ENCODE measurements at regions of chr20 and their contacts with region 1.

Region 1: DNA sequence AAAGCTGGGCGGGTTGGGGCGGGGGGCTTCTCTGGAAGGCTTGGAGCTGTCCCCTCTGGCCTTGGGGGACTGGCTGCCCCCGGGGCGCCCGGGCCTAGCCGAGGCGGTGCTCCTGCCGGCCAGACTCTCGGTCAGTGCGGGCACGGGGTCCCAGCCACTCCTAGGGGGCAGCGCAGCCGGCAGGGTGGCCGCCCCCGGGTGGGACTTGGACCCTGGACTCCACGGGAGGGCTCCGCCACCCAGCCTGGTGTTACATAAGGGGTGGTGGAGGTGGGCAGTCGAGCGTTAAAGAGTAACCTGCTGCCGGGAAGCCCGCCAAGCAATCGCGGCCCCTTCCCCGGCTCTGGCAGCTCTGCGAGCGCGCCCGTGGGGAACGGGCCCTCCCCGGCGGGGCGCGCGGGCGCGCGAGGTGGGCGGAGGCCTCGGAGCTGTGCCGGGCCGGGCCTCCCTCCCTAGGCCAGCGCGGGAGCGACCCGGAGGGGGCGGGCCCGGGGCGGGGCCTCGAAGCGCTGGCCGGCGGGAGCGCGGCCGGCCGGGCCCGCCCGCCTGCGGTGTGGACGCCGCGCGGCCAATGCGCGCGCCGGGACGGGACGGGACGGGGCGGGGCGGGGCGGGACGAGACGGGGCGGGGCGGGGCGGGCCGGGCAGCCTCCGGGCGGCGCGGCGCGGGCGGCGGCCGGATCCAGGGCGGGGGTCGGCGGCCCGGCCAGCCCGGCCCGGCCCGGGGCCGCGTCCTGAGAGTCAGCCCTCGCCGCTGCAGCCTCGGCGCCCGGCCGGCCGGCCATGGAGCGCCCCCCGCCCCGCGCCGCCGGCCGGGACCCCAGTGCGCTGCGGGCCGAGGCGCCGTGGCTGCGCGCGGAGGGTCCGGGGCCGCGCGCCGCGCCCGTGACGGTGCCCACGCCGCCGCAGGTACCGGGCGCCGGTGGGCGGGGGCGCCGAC is at the start of gene SLC2A4RG:
- DNase-seq: peak; percentile 91
- ATAC-seq: peak; percentile 73
- total RNA-seq, gene SLC2A4RG: 97.4 TPM

Region 2: DNA sequence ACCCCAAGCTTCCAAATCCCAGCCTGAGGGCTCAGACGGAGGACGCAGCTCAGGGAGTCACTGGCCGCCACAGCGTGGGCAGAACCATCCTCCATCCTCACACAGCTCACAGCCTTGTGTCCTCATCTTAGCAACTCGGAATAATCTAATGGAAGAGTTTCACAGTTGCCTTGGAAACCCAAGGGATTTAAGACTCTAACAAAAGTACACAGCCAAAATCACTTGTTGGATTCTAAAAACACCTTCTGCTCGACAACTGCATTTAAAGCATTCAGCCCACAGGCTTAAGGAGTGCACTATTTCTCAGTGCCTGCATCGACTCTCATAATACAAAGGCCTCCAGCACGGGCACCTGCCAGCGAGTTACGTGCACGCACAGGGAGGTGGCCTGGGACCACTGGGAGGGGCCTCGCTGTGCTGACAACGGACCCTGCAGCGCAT is 46.3 kb after region 1 on chr20:
- intact Hi-C with region 1: loop called (anchors 5 kb)
- DNase-seq: no peak
- ATAC-seq: no peak

Region 3: DNA sequence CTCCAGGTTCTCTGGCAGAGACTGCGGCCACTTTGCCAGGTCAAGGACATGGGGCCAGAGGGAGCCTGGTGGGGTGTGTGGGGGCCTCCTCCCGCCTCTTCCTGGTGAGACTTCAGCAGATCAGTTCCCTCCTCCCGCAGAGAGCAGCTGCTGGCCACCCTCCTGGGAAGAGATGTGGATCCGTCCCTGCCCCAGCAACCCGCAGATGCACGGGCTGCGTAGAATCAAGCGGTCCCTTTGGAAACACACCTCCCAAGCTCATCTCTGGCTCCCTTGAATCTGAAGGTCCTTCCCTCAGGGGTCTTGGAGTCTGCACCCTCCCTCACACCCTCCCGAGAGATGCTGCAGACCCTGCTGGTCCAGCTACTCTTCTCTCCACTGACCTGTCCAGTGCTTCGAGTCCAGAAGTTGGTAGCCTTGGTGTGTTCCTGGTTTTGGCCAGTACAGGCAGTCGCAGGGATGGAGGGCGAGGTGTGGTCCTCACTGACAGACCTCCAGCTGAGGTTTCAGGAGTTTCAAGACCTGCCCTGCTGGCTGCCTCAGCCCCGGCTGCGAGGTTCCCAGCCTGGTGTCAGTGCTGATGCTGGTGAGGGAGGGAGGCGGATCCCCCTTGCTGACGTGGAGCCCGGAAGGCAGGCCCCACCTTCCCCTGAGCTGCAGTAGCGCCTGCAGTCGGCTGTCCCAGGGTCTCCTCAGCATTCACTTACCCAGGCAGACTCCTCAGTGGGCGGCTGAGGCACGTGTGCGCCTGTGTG is 367.8 kb after region 1 on chr20 and contains the start of gene NPBWR2:
- intact Hi-C with region 1: no loop called
- DNase-seq: no peak
- ATAC-seq: no peak
- total RNA-seq, gene NPBWR2: not detected